ENCODE measurements at regions of chr12 and their contacts with region 1.

Region 1: GRCh38 chr12:24014915-24015765 is 65.7 kb upstream of the SOX5 start:
- DNase-seq: no peak
- H3K4me3 ChIP-seq: no peak overlapping the region
- H3K27ac ChIP-seq: no peak overlapping the region
- H3K4me1 ChIP-seq: no peaks in the 10 kb centered on the region
- H3K27me3 ChIP-seq: peaks cover 17% of the 10 kb centered on the region; the same call in 1 of the 2 replicates
- CTCF ChIP-seq: no peak

Region 2: GRCh38 chr12:23611320-23611719 is 403.8 kb before region 1 on chr12:
- CTCF ChIA-PET with region 1: no interaction called
- POLR2A ChIA-PET with region 1: no interaction called
- intact Hi-C with region 1: no loop called
- DNase-seq: no peak
- H3K4me3 ChIP-seq: no peak overlapping the region
- H3K27ac ChIP-seq: no peak overlapping the region
- H3K4me1 ChIP-seq: no peaks in the 10 kb centered on the region
- H3K27me3 ChIP-seq: no peaks in the 10 kb centered on the region
- CTCF ChIP-seq: no peak

Region 3: GRCh38 chr12:23949348-23950209 is 65.6 kb before region 1 on chr12 and contains the start of gene SOX5:
- CTCF ChIA-PET with region 1: no interaction called
- POLR2A ChIA-PET with region 1: no interaction called
- intact Hi-C with region 1: no loop called
- DNase-seq: no peak
- H3K4me3 ChIP-seq: no peak within 1 kb of the TSS
- H3K27ac ChIP-seq: no peak within 1 kb of the TSS
- H3K4me1 ChIP-seq: no peaks in the 10 kb centered on the region
- H3K27me3 ChIP-seq: peaks cover 24% of the 10 kb centered on the region; the same call in 1 of the 2 replicates
- CTCF ChIP-seq: no peak
- total RNA-seq, gene SOX5: not detected in 2 replicates

Region 4: DNA sequence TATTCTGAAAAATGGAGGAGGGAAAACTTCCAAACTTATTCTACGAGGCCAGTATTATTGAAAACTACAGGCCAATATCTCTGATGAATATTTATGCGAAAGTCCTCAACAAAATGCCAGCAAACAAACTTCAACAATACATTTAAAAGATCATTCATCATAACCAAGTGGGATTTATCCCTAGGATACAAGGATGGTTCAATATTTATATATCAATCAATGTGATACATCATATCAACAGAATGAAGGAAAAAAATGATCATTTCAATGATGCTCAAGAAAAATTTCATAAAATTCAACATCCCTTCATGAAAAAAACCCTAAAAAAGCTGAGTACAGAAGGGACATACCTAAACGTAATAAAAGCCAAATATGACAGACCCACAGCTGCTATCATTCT is 1583.8 kb after region 1 on chr12:
- CTCF ChIA-PET with region 1: no interaction called
- POLR2A ChIA-PET with region 1: interaction called, 10 read pairs
- intact Hi-C with region 1: no loop called
- DNase-seq: no peak
- H3K4me3 ChIP-seq: no peak overlapping the region
- H3K27ac ChIP-seq: no peak overlapping the region
- H3K4me1 ChIP-seq: no peaks in the 10 kb centered on the region
- H3K27me3 ChIP-seq: no peaks in the 10 kb centered on the region
- CTCF ChIP-seq: no peak

Measured in PC-9 (cell line).